ENCODE measurements at regions of chrX and their contacts with region 1.

Region 1: DNA sequence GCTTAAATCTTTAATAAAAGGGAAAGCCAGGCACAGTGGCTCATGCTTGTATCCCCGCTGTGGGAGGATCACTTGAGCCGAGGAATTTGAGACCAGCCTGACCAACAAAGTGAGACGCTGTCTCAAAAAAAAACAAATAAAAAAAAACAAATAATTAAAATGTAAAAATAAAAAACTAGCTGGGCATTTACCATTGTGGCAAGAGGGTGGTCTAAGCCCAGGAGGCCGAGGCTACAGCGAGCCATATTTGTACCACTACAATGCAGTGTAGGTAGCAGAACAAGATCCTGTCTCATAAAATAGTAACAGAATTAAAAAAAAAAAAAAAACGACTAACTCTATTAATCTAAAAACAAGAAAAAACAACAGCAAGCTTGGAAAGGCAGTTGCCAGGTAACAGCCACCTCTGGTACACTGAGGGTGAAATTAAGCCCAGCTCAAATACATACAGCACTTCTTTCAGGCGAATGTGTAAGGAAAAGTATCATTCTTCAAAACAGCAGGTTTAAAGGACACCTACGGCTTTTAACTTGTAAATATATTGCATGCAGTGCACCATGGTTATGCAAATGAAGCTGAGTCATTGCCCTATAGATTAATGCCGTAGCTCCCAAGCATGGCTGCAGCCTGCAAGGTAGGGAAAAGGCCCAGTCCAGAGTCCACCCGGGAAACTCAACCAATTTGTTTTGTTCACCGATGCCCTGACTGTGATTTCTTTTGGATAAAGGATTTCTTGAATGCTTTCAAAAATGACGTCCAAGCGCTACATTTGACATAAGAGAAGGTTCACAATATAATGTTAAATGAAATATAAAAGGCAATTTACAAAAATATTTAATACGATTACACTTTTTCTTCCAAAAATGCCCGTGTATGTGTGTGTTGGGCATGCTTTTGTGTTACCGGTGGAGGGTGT is 14.5 kb upstream of the TXLNG start:
- DNase-seq: peak; percentile 74

Region 2: DNA sequence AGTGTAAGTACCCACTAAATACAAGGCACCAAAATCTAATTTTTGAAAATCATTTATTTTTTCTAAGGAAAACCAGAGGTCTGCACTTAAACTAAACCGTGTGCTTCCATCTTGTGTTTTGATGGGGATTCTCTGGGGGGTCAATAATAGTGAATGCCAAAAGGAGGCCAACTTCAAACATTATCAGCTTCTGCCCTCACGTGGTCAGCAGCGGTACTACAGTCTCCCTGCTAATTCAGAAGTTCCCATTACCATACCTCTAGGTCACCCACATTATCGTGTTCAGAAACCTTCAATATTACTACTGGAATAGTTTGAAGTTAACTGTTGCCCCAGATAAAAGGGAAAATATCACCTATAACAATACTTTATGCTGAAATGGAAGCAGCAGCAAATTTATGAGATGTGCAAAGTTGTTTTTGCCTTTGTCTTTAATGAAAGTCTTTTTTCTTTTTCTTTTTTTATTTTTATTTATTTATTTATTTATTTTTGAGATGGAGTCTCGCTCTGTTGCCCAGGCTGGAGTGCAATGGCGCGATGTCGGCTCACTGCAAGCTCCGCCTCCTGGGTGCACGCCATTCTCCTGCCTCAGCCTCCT is 76.6 kb before region 1 on chrX:
- CTCF ChIA-PET with region 1: no interaction called
- POLR2A ChIA-PET with region 1: no interaction called
- DNase-seq: peak; percentile 67

Region 3: GRCh38 chrX:16719334-16720084 is 52.2 kb before region 1 on chrX and contains the start of gene SYAP1:
- CTCF ChIA-PET with region 1: interaction called, 5 read pairs
- POLR2A ChIA-PET with region 1: interaction called, 16 read pairs
- DNase-seq: peak; percentile 92

Region 4: DNA sequence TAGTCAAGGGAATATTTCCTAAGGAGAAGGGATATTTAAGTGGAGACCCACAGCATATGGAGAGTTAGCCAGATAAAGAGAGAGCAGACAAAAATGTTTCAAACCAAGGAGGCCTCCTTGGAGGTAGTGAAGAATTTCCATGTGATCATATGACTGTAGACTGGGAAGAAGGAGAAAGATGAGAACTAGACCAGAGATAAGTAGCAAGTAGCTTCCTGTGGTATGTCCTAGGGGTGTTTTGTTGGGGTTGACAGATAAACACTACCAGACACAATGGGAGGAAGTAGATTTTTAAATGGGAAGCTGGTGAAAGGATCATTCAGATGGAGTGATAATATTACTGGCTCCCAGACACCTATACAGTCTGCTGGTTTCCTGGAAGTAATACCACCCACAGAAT is 38.7 kb before region 1 on chrX:
- CTCF ChIA-PET with region 1: no interaction called
- POLR2A ChIA-PET with region 1: no interaction called
- DNase-seq: no peak

Region 5: DNA sequence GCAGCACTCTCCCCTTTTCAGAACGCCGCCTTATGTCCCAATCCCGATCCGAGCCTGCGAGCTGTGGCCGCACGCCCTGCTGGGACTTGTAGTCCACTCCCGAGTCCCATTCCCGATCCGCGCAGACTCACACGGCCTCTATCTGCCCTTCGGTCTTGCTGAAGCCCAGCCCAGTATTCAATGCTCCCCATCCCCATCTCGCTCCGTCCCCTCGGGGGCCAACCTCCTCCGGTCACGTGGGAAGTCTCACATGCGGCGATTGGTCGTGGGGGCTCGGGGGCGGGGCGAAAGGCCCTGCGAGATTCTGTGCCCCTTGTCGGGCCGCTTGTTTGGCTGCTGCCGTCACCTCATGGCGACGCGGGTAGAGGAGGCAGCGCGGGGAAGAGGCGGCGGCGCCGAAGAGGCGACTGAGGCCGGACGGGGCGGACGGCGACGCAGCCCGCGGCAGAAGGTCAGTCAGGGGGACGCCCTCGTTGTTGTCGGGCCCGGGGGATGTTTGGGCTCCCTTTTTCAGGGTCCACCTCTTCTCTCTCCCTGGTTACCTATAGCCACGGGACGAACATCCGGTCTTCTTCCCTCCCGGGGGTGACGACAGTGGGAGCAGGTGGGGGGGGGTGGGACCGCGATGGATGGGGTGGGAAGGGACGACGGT is 14.5 kb after region 1 on chrX and contains the start of gene TXLNG:
- CTCF ChIA-PET with region 1: no interaction called
- POLR2A ChIA-PET with region 1: interaction called, 22 read pairs
- DNase-seq: peak; percentile 97

Region 6: GRCh38 chrX:16807548-16807947 is 35.8 kb after region 1 on chrX:
- CTCF ChIA-PET with region 1: no interaction called
- POLR2A ChIA-PET with region 1: interaction called, 10 read pairs
- DNase-seq: peak; percentile 54

Region 7: DNA sequence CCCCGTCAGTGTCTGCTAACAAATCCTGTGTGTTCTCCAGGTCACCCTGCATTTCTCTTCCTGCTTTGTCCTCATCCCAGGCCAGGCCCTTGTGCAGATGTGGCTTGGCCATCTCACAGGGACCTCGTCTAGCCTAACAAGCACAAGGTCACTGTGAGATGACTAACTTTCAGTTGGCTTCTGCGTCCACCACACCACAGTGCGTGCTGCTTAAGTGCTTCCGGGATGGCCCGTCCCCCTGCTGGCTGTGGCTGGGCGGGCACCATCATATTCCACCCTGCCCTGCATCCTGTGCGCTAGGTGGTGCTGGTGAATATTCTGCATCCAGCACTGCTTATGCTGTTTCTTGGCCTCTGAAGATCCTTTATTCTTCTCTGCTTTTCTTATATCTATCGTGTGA is 64.6 kb after region 1 on chrX:
- CTCF ChIA-PET with region 1: no interaction called
- POLR2A ChIA-PET with region 1: no interaction called
- DNase-seq: peak; percentile 53

Measured in HEK293T (cell line).